Right cardiac atrium (tissue), 5 donors: ENCODE measurements at regions of chr3 and their contacts with region 1.

Region 1: GRCh38 chr3:197224034-197224444 is 74.4 kb downstream of the DLG1 start:
- DNase-seq: no peak
- ATAC-seq: peak; percentile 47 to 48
- H3K4me3 ChIP-seq: no peak overlapping the region
- H3K27ac ChIP-seq: no peak overlapping the region
- H3K4me1 ChIP-seq: peaks cover 4% of the 10 kb centered on the region
- H3K27me3 ChIP-seq: no peaks in the 10 kb centered on the region

Region 2: DNA sequence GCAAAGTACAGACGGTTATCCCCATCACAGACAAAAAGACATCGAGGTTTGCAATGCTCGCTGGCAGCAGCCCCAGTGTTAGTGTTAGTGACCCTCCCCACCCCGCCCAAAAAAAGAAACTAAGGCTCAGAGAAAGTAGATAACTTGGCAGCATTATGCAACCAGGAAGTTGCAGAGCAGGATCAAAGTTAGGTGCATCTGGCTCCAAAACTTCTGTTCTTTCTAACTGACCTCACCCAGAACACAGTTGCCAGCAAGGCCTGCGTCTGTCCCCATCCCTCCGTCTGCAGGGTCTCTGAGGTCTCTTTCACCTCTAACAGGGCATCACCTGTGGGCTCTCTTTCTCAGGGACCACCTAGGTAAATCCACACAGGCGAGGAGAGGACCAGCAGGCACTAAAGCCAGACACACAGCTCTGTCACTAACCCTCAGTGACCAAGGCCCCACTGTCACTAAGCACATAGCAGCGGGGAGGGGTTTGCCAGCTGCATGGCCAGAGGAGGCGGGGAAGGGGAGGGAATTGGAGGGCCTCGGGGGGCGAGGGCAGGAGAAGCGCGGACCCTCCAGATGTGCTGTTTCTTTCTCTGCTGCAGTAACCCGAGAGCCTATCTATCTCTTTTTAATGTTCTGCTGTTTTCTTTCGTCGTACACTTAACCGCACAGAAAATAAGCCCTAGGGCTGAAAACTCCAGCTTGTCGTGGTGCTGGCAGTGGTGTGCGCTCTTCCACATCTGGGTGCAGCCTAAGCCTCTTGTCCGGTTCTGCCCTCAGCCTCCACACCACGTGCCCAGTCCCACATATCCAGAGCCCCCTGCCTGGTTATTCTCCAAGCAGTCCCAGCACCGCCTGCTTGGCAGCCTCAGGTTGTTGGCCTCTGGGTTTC is 280.4 kb after region 1 on chr3:
- intact Hi-C with region 1: loop called in 1 of 4 experiments (anchors 5 kb)
- DNase-seq: no peak
- ATAC-seq: no peak
- H3K4me3 ChIP-seq: no peak overlapping the region
- H3K27ac ChIP-seq: no peak overlapping the region
- H3K4me1 ChIP-seq: no peaks in the 10 kb centered on the region
- H3K27me3 ChIP-seq: no peaks in the 10 kb centered on the region

Region 3: GRCh38 chr3:197516517-197516889 is 292.5 kb after region 1 on chr3:
- intact Hi-C with region 1: loop called in 1 of 4 experiments (anchors 10 kb)
- DNase-seq: no peak
- ATAC-seq: no peak
- H3K4me3 ChIP-seq: no peak overlapping the region
- H3K27ac ChIP-seq: no peak overlapping the region
- H3K4me1 ChIP-seq: no peaks in the 10 kb centered on the region
- H3K27me3 ChIP-seq: no peaks in the 10 kb centered on the region